ENCODE measurements at regions of chr14 and their contacts with region 1.

Region 1: DNA sequence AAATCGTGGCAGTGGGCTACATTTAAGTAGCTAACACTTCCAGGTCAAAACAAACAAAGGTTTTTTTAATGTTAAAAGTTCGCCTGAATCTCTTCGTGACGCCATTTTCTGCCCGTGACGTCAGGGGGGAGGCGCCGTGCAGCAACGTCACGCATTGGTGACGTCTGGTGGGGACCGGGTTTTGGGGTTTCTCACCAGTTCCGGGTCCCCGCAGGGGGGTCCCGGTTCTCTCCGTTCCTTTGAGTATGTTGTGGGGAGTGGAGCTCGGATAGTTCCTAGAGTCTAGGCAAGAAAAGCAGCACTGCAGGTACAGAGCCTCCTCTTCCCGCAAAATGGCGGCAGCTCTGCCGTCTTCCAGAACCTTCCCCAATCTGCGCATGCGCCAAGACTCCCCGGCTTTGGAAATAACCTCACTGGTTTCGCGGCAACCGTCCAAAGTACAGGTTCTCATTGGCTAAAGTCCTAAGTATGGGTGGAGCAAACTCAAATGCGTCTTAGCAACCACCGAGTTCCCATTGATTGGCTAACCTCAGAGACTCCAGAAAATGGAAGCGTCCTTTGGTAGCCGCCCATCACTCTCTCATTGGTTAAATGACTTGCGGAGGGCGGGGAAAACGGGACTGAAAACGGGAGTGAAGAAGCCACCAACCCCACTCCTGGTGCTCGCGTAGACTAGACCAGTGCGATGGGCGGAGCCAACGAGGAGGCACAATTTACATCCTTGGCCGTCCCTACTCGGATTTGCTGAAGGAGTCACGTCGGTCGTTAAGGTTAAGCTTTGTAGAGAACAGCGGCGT is at the start of gene RBM23:
- H3K4me3 Mint-ChIP-seq: peak within 1 kb of the TSS; percentile 89
- H3K27ac Mint-ChIP-seq: peak within 1 kb of the TSS; percentile 100
- H3K4me1 Mint-ChIP-seq: peaks cover 50% of the 10 kb centered on the region
- H3K27me3 Mint-ChIP-seq: no peaks in the 10 kb centered on the region

Region 2: DNA sequence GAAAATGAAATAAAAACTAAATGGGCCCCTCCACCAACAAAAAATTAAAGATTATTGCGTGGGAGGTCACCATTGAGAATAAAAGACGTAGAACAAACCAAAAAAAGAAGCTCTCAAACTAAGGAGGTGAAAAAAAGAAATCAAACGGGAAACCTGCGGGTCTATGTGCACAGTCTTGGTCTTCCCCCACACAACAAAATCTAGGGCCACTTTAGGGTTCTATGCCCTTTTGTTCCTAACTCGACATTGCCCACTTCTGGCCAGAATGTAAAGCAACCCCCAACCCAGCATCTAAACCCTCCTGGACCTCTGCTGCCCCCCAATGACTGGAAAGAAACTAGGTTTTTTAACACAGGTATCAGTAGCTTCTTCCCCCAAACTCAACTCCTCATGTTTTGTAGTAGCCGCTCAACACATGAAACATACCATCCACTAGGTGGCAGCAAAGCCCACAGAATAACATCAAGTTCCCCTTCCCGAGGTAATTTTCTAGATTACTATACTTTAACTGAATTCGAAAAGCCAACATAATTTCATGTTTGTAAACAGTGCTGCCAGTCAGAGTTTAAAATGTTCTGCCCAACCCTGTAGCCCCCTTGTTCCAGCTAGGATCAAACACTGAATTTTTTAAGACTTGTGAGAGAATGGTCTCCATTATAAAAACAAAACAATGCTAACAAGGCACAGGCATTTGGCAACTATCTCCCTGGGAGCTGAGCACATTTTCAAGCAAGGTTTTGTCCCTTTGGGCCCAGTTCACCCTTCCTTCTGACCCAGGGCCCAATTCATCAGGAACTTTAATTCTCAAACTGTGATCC is 348.7 kb before region 1 on chr14:
- intact Hi-C with region 1: no loop called
- H3K4me3 Mint-ChIP-seq: no peak overlapping the region
- H3K27ac Mint-ChIP-seq: no peak overlapping the region
- H3K4me1 Mint-ChIP-seq: peaks cover 17% of the 10 kb centered on the region
- H3K27me3 Mint-ChIP-seq: no peaks in the 10 kb centered on the region

Region 3: DNA sequence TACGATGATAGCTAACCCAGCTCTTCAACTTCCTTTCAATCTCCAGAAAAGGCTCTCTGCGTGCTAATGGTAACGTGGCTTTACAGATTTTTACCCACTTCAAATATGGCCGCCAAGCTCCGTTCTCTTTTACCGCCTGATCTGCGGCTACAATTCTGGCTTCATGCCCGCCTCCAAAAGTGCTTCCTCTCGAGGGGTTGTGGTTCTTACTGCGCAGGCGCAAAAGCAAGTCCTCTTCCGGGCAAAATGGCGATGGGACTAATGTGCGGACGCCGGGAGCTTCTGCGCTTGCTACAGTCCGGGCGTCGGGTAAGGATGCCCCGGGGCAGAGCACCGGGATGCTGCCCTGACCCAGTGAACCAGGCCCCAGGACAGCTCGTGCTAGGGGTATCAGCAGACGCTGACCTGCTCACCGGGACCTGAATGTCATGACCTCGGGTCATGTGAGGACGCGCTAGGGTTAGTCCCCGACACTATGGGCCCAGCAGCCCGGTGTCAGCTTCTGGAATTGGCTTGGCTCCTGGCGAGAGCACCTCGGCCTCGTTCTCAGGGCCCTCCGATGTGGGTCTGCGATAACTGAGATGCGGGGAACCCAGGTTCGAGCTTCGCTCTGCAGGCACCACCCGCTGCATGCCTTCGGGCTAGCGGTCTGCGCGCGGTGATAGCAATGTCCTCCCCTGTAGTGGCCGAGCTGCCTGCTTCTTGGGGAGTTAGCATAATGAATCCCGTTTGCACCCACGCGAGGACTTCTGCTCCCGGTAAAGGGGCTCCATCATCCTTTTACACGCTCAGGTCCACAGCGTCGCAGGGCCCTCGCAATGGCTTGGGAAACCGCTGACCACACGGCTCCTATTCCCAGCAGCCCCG is 152.3 kb before region 1 on chr14 and contains the start of gene OXA1L:
- intact Hi-C with region 1: loop called (anchors 5 kb)
- H3K4me3 Mint-ChIP-seq: peak within 1 kb of the TSS; percentile 90
- H3K27ac Mint-ChIP-seq: peak within 1 kb of the TSS; percentile 98
- H3K4me1 Mint-ChIP-seq: peaks cover 40% of the 10 kb centered on the region
- H3K27me3 Mint-ChIP-seq: no peaks in the 10 kb centered on the region

Region 4: DNA sequence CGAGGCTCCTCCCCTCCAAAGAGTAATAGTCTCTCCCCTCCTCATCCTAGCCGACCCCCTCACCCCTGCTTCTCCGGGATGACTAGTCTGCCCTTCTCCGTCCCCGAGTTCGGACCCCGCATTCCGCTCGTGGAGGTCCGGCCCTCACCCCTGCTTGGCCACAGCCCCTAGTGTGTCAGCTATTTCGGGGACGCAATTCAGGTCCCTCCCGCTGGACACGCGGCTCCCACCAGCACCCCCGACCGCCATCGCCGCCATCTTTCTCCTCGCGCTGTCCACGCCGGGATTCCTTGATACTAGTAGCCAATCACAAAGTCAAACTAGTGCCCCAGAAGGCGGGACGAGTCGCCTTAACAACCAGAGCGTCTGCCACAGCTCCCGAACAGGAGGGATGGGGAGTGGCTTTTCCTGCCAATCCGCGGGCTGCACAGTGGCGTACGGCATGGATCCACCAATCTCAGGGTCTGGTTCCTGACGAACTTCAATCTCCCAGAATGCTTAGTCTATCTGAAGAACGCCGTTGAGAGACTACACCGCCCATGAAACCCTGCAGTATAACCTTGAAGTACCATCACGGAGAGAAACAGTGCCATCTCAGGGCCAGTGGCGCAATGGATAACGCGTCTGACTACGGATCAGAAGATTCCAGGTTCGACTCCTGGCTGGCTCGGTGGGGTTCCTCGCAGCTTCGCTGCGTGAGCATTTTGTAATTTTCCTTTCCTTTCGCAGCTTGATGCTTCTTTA is 10.3 kb after region 1 on chr14 and contains the start of gene PRMT5:
- intact Hi-C with region 1: loop called (anchors 1 kb)
- H3K4me3 Mint-ChIP-seq: no peak within 1 kb of the TSS
- H3K27ac Mint-ChIP-seq: no peak within 1 kb of the TSS
- H3K4me1 Mint-ChIP-seq: peaks cover 17% of the 10 kb centered on the region
- H3K27me3 Mint-ChIP-seq: no peaks in the 10 kb centered on the region

Region 5: DNA sequence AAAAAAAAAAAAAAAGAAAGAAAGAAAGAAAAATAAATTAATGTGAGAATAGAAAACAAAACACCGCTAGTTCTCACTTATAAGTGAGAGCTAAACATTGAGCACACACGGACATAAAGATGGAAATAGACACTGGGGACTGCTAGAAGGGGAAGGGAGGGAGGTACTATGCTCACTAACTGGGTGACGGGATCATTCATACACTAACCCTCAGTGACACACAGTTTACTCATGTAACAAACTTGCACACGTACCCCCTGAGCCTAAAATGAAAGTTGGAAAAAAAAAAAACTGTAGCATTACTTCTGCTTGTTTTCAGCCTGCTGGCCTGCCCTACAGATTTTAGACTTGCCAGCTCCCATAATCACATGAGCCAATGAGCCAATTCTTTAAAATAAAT is 20.7 kb after region 1 on chr14:
- intact Hi-C with region 1: no loop called
- H3K4me3 Mint-ChIP-seq: no peak overlapping the region
- H3K27ac Mint-ChIP-seq: no peak overlapping the region
- H3K4me1 Mint-ChIP-seq: no peaks in the 10 kb centered on the region
- H3K27me3 Mint-ChIP-seq: no peaks in the 10 kb centered on the region

Region 6: DNA sequence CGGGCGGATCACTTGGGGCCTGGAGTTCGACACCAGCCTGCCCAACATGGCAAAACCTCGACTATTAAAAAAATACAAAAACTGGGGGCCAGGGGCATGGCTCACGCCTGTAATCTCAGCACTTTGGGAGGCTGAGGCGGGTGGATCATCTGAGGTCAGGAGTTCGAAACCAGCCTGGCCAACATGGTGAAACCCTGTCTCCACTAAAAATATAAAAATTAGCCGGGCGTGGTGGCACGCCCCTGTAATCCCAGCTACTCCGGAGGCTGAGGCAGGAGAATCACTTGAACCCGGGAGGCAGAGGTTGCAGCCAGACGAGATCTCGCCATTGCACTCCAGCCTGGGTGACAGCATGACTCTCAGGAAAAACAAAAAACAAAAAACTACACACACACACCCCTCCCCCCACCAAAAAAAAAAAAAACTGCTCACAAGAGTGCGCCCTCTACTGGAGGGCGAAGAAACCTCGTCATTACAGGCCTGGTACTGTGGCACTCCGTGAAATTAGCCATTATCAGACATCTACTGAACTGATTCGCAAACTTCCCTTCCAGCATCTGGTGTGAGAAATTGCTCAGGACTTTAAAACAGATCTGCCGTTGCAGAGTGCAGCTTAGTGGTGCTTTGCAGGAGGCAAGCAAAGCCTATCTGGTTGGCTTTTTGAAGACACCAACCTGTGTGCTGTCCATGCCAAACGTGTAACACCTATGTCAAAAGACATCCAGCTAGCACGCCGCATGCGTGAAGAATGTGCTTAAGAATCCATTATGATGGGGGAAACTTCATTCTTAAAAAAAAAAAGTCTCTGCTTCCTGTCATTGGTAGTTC is 375.9 kb after region 1 on chr14:
- intact Hi-C with region 1: no loop called
- H3K4me3 Mint-ChIP-seq: peak overlapping the region; percentile 37
- H3K27ac Mint-ChIP-seq: peak overlapping the region; percentile 69
- H3K4me1 Mint-ChIP-seq: peaks cover 31% of the 10 kb centered on the region
- H3K27me3 Mint-ChIP-seq: peaks cover 4% of the 10 kb centered on the region